ENCODE measurements at regions of chr12 and their contacts with region 1.

Region 1: GRCh38 chr12:81095501-81096232 is 17.8 kb downstream of the ACSS3 start:
- DNase-seq: no peak
- ATAC-seq: peak in 2 of 4 donors; percentile 39 to 45
- H3K4me3 ChIP-seq: no peak overlapping the region
- H3K27ac ChIP-seq: no peak overlapping the region
- H3K4me1 ChIP-seq: peaks cover 9% of the 10 kb centered on the region
- H3K27me3 ChIP-seq: no peaks in the 10 kb centered on the region
- CTCF ChIP-seq: no peak

Region 2: DNA sequence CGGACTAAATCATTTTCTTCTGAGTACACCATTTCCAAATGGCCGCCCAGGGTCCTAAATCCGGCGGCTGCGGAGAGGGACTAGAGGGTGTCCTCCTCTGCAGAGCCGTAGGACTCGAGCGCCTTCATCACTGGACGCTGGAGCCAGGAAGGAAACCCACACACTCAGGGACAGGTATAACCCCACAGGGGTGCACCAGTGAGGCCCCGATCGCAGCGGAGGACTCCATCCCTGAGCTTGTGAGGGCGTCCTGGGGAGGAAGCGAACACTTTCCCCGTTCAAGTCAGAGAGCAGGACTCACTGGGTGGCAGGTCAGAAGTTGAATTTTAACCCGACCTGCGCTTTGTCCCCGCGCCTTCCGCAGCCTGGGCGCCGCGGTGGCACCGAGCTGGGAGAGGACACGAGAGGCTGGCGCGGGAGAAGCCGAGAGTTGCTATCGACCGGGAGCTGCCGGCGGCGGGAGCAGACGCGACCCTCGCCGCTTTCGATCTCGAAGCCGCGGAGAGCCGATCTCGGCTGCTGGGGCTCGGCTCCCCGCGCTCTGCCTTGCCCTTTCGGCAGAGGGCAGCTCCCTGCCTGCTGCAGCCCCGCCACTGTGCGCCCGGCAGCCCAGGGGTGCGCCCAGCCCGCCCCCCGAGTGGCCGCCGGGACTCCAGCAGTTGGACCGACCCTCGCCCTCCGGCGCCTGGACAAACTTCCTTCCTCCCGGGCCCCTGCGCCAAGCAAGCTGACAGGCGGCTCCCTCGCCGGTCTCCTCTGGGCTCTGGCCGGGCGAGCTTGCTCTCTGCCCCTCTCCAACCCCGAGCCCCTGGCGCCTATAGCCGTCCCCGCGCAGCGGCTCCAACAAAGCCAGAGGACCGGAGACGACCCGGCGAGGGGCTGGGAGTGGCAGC is 158.9 kb before region 1 on chr12:
- intact Hi-C with region 1: loop called in 1 of 2 experiments (anchors 10 kb)
- DNase-seq: peak; percentile 30 to 58
- ATAC-seq: peak; percentile 64 to 80 (median 73)
- H3K4me3 ChIP-seq: peak overlapping the region; percentile 83
- H3K27ac ChIP-seq: peak overlapping the region; percentile 56
- H3K4me1 ChIP-seq: no peaks in the 10 kb centered on the region
- H3K27me3 ChIP-seq: no peaks in the 10 kb centered on the region
- CTCF ChIP-seq: no peak

Region 3: GRCh38 chr12:81229758-81230157 is 134.1 kb after region 1 on chr12:
- intact Hi-C with region 1: no loop called
- DNase-seq: no peak
- ATAC-seq: no peak
- H3K4me3 ChIP-seq: no peak overlapping the region
- H3K27ac ChIP-seq: no peak overlapping the region
- H3K4me1 ChIP-seq: no peaks in the 10 kb centered on the region
- H3K27me3 ChIP-seq: no peaks in the 10 kb centered on the region
- CTCF ChIP-seq: no peak

Measured in psoas muscle (tissue), 8 donors.